Endothelial cell of umbilical vein (primary cell): ENCODE measurements at regions of chr2 and their contacts with region 1.

Region 1: GRCh38 chr2:240513549-240514287 is 44.1 kb downstream of the ANKMY1 start:
- DNase-seq: peak; percentile 70
- H3K4me3 ChIP-seq: no peak overlapping the region
- H3K27ac ChIP-seq: no peak overlapping the region
- H3K4me1 ChIP-seq: no peaks in the 10 kb centered on the region
- H3K27me3 ChIP-seq: no peaks in the 10 kb centered on the region
- CTCF ChIP-seq: peak; percentile 87 to 92
- POLR2A ChIP-seq: no peak

Region 2: DNA sequence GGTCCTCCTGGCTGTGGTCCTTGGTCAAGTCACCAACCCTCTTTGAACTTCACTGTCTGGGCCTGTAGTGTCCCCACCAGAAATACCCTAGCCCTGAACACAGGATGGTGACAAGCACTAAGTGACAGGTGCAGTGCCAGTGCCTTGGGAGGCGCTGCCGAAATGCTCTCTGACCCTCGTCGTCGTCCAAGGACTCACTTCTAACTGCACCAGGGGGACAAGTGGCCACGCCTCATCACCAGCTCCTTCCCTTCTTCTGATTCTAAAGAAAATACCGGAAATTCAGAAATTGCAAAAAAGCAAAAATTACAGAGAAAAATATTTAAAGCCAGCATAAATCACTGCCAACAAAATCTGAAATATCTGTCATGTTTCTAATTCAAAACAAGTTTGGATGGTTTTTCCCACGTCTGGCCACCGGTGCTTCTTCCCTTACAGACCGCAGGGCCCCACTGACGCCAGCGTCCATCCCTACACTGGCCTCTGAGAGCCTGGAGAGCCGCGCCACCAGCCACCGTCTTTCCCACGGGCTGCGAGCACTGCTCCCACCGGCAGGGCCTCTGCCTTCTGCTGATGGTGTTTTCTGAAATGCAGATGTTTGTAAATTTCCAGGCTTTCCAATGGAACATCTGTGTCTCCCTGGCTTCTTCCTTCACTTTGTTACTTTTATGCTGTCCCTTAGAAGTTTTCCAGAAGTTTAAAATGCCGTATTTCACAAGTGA is 115.6 kb before region 1 on chr2:
- CTCF ChIA-PET with region 1: no interaction called
- POLR2A ChIA-PET with region 1: no interaction called
- dilution Hi-C with region 1: no loop called
- intact Hi-C with region 1: no loop called
- DNase-seq: no peak
- H3K4me3 ChIP-seq: no peak overlapping the region
- H3K27ac ChIP-seq: no peak overlapping the region
- H3K4me1 ChIP-seq: no peaks in the 10 kb centered on the region
- H3K27me3 ChIP-seq: no peaks in the 10 kb centered on the region
- CTCF ChIP-seq: no peak
- POLR2A ChIP-seq: no peak

Region 3: GRCh38 chr2:240586198-240586918 is 72.6 kb after region 1 on chr2 and contains the start of gene CAPN10:
- CTCF ChIA-PET with region 1: interaction called, 26 read pairs
- POLR2A ChIA-PET with region 1: no interaction called
- dilution Hi-C with region 1: no loop called
- intact Hi-C with region 1: loop called (anchors 1 kb)
- DNase-seq: peak; percentile 95
- H3K4me3 ChIP-seq: peak within 1 kb of the TSS; percentile 76 to 84 (median 84)
- H3K27ac ChIP-seq: peak within 1 kb of the TSS; percentile 74
- H3K4me1 ChIP-seq: peaks cover 17% of the 10 kb centered on the region
- H3K27me3 ChIP-seq: no peaks in the 10 kb centered on the region
- CTCF ChIP-seq: no peak
- POLR2A ChIP-seq: peak; percentile 66
- total RNA-seq, gene CAPN10: 37.9 and 39.9 TPM in 2 replicates

Region 4: GRCh38 chr2:240704651-240705050 is 190.9 kb after region 1 on chr2:
- CTCF ChIA-PET with region 1: interaction called, 12 read pairs
- POLR2A ChIA-PET with region 1: no interaction called
- dilution Hi-C with region 1: no loop called
- intact Hi-C with region 1: loop called (anchors 5 kb)
- DNase-seq: no peak
- H3K4me3 ChIP-seq: no peak overlapping the region
- H3K27ac ChIP-seq: no peak overlapping the region
- H3K4me1 ChIP-seq: no peaks in the 10 kb centered on the region
- H3K27me3 ChIP-seq: no peaks in the 10 kb centered on the region
- CTCF ChIP-seq: no peak
- POLR2A ChIP-seq: no peak